HAP-1 (cell line): ENCODE measurements at regions of chr1 and their contacts with region 1.

Region 1: GRCh38 chr1:201709564-201710295 is 119.2 kb upstream of the IPO9 start:
- DNase-seq: peak; percentile 55 to 88
- H3K4me3 ChIP-seq: no peak overlapping the region
- H3K4me1 ChIP-seq: peaks cover 4% of the 10 kb centered on the region
- H3K27me3 ChIP-seq: no peaks in the 10 kb centered on the region

Region 2: GRCh38 chr1:201559679-201560162 is 150.0 kb before region 1 on chr1:
- in situ Hi-C with region 1: loop called (anchors 5 kb)
- DNase-seq: peak; percentile 82 to 87
- H3K4me3 ChIP-seq: no peak overlapping the region
- H3K4me1 ChIP-seq: peaks cover 3% of the 10 kb centered on the region; the same call in 1 of the 2 replicates
- H3K27me3 ChIP-seq: no peaks in the 10 kb centered on the region

Region 3: DNA sequence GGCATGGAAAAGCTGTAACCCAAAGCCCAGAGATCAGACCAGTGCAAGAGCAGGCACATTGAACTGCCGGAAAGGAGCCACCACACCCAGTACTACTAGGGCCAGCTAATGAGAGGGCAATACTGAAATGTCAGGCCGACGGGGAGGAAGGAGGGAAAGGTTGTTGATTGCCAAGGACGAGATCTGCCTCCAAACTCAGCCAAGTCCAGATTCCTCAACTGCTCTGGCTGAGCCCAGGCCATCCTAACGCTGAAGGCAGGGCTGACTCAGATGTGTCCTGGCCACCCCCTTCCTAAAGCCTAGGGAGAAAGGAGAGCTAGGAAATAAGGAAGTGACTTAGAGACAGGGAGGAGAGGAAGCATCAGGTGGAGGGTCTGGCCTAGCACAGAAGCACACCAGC is 77.1 kb after region 1 on chr1:
- in situ Hi-C with region 1: loop called (anchors 5 kb)
- DNase-seq: no peak
- H3K4me3 ChIP-seq: no peak overlapping the region
- H3K4me1 ChIP-seq: no peaks in the 10 kb centered on the region
- H3K27me3 ChIP-seq: no peaks in the 10 kb centered on the region